PC-9 (cell line): ENCODE measurements at regions of chr3 and their contacts with region 1.

Region 1: DNA sequence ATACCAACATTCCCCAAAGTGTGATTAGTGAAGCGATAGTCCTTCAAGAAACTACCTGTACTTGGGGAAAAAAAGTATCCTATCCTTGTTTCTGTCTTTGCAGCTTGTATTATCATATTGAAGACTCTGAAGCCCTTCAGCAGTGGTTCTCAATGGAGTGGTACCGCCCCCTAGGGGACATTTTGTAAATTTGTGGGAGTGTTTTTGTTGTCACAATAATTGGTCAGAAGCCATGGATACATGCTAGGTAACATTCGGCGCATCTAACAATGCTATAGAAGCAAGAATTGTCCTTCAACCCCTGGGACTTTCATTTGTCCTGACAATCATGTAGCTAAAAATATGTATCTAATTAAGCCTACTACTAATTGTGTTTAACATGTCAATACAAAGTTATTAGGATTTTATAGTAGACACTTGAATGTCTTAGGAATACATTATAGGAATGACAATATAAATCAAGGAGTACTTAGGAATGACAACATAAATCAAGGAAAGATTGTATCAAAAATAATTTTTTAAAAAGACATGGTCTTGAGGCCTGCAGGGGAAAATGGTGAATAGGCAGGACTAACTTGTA is 53.7 kb downstream of the NMD3 start:
- DNase-seq: peak in 1 of 2 experiments; percentile 43
- H3K4me3 ChIP-seq: no peak overlapping the region
- H3K27ac ChIP-seq: no peak overlapping the region
- H3K4me1 ChIP-seq: no peaks in the 10 kb centered on the region
- H3K27me3 ChIP-seq: no peaks in the 10 kb centered on the region
- CTCF ChIP-seq: peak; percentile 71

Region 2: GRCh38 chr3:160707187-160707794 is 567.5 kb before region 1 on chr3:
- CTCF ChIA-PET with region 1: no interaction called
- POLR2A ChIA-PET with region 1: no interaction called
- intact Hi-C with region 1: loop called (anchors 5 kb)
- DNase-seq: peak; percentile 21 to 41
- H3K4me3 ChIP-seq: no peak overlapping the region
- H3K27ac ChIP-seq: no peak overlapping the region
- H3K4me1 ChIP-seq: no peaks in the 10 kb centered on the region
- H3K27me3 ChIP-seq: no peaks in the 10 kb centered on the region
- CTCF ChIP-seq: peak; percentile 76

Region 3: DNA sequence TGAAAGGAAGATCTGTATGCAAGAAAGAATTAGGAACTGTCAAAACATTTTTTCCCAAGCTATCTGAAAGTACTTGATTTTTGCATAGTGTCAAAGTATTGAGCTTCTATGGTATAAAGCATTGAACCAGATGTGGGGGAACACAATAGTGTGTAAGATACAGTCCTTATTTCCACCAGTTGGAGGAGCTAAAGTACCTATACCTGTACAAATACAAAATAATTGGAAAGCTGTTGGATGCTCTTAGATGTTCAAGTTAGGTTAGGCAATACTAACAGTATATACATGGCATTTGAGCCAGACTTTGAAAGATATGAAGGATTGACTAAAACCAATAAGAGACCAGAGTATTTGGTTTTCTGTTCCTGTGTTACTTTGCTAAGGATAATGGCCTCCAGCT is 318.0 kb before region 1 on chr3:
- CTCF ChIA-PET with region 1: no interaction called
- POLR2A ChIA-PET with region 1: no interaction called
- intact Hi-C with region 1: loop called (anchors 5 kb)
- DNase-seq: no peak
- H3K4me3 ChIP-seq: no peak overlapping the region
- H3K27ac ChIP-seq: no peak overlapping the region
- H3K4me1 ChIP-seq: no peaks in the 10 kb centered on the region
- H3K27me3 ChIP-seq: no peaks in the 10 kb centered on the region
- CTCF ChIP-seq: peak; percentile 67

Region 4: DNA sequence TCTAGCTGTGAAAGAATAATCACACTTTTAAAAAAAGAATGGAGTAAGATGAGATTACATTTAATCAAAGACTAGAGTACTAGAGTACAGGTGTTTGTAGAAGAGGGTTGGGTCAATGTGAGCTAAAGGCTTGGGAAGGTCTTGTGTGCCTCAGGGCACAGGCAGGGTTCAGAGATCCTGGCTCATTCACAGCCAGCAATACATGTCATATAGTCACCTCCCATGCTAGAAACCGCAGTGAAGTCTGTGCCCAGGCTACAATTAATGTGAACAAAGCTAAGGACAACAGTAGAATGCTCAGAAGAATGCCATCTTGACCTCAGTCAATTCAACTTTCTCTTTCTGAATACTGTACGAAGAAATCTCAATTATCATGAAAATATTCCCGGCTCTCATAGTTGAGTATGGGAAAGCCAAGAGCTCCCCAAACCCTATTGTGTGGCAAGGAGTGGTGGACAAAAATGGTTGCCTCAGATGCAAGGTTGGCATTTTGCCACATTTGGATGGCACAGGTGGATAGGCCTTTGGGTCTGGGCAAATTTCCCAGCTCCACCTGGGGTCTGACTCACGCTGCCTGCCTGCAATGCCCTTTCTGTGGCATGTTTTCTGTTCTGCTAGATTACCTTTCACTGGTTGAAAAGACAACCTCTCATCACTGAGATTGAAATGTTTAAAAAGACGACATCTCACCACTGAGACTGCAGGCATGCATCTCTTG is 16.5 kb after region 1 on chr3:
- CTCF ChIA-PET with region 1: interaction called, 8 read pairs
- POLR2A ChIA-PET with region 1: no interaction called
- intact Hi-C with region 1: loop called (anchors 1 kb)
- DNase-seq: peak; percentile 79 to 91
- H3K4me3 ChIP-seq: no peak overlapping the region
- H3K27ac ChIP-seq: peak overlapping the region; percentile 7; the same call in 1 of the 2 replicates
- H3K4me1 ChIP-seq: peaks cover 24% of the 10 kb centered on the region
- H3K27me3 ChIP-seq: no peaks in the 10 kb centered on the region
- CTCF ChIP-seq: no peak

Region 5: DNA sequence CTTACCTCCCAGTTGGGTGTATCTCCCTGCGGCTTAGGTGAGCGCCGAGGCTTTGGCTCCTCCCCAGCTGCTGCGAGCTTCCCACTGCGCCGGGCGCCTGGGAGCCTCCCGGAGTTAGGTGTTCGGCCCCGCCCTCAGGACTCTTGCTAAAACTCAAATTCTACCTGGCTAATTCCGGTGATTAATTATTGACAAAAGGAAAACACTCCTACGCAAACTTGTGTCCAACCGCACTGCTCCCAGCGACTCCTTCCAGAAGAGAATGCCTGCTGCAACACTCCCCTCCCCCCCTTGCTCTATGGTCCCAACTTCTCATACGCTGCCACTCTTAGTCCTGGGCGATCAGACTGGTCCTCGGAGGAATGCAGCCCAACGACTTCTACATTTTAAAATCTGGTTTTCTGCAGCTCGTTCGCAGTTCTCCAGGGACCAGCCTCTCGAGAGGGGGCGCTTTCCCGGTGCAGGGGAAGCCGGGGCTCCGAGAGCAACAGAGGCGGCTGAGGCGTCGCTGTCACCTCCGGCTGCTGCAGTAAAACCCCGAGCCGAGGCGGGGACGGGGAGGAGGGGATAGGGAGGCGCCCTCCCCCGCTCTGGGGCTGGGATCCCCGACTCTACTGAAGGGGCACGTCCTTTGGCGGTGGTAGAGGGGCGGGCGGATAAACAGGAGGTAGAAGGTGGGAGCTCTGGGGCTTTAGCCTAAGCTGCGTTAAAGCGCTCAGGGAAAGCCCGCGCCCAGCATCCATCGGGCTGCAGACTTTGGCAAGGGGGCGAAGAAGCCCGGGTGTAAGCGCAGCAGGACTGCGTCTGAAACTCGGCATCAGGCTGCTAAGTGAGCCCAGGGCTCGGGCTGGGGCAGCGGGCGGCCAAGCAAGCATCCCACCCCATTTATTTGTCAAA is 96.9 kb after region 1 on chr3 and contains the start of gene SPTSSB:
- CTCF ChIA-PET with region 1: no interaction called
- POLR2A ChIA-PET with region 1: no interaction called
- intact Hi-C with region 1: loop called (anchors 1 kb)
- DNase-seq: peak; percentile 59 to 84
- H3K4me3 ChIP-seq: peak within 1 kb of the TSS; percentile 71
- H3K27ac ChIP-seq: no peak within 1 kb of the TSS
- H3K4me1 ChIP-seq: peaks cover 11% of the 10 kb centered on the region; the same call in 1 of the 2 replicates
- H3K27me3 ChIP-seq: no peaks in the 10 kb centered on the region
- CTCF ChIP-seq: peak; percentile 61
- total RNA-seq, gene SPTSSB: 1.2 and 4.0 TPM in 2 replicates